ENCODE measurements at regions of chr10 and their contacts with region 1.

Region 1: GRCh38 chr10:60964257-60965235 is 20.6 kb upstream of the RHOBTB1 start:
- DNase-seq: peak in 7 of 9 donors; percentile 9 to 47 (median 29)
- ATAC-seq: peak; percentile 74
- H3K4me3 ChIP-seq: no peak overlapping the region
- H3K4me3 Mint-ChIP-seq: no peak overlapping the region
- H3K27ac ChIP-seq: no peak overlapping the region
- H3K27ac Mint-ChIP-seq: no peak overlapping the region
- H3K4me1 ChIP-seq: no peaks in the 10 kb centered on the region
- H3K4me1 Mint-ChIP-seq: peaks cover 0 to 18% (median 0%) of the 10 kb centered on the region in 7 donors
- H3K27me3 ChIP-seq: no peaks in the 10 kb centered on the region
- H3K27me3 Mint-ChIP-seq: peaks cover 24 to 30% (median 26%) of the 10 kb centered on the region in 5 donors

Region 2: DNA sequence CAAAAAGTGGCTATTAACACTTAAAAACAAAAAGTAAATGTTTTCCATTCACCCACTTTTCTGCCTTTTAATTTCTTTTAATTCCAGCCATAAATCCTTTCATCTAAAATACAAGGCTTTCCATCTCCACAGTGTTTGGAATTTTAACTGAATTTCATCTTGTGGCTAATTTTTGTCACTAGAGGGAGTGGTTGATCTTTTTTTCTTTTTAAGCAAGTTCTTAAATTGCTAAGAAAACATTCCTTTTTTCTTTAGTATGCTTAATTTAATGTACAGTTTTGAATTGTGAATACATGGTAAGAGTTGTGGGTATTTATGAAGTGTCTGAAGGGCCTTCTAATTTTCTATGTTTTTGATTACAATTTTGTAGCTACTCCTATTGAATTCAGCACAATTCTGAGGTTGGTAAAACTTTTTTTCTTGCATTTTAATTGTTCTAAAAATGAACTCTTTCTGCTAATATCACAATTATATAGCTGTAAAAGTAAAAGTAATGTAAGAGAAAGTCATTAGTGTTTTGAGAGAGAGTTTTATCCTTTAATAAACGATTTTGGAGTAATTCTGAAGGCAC is 520.0 kb before region 1 on chr10:
- CTCF ChIA-PET with region 1: no interaction called
- POLR2A ChIA-PET with region 1: no interaction called
- intact Hi-C with region 1: loop called in 1 of 2 experiments (anchors 10 kb)
- DNase-seq: no peak
- ATAC-seq: no peak
- H3K4me3 ChIP-seq: no peak overlapping the region
- H3K4me3 Mint-ChIP-seq: no peak overlapping the region
- H3K27ac ChIP-seq: no peak overlapping the region
- H3K27ac Mint-ChIP-seq: no peak overlapping the region
- H3K4me1 ChIP-seq: peaks cover 0 to 11% of the 10 kb centered on the region in 2 donors
- H3K4me1 Mint-ChIP-seq: peaks cover 12 to 34% (median 20%) of the 10 kb centered on the region in 7 donors
- H3K27me3 ChIP-seq: no peaks in the 10 kb centered on the region
- H3K27me3 Mint-ChIP-seq: no peaks in the 10 kb centered on the region

Region 3: GRCh38 chr10:60816628-60817397 is 147.7 kb before region 1 on chr10:
- CTCF ChIA-PET with region 1: no interaction called
- POLR2A ChIA-PET with region 1: no interaction called
- intact Hi-C with region 1: loop called (anchors 1 kb)
- DNase-seq: peak in 7 of 9 donors; percentile 12 to 63 (median 40)
- ATAC-seq: peak; percentile 83
- H3K4me3 ChIP-seq: no peak overlapping the region
- H3K4me3 Mint-ChIP-seq: no peak overlapping the region
- H3K27ac ChIP-seq: no peak overlapping the region
- H3K27ac Mint-ChIP-seq: no peak overlapping the region
- H3K4me1 ChIP-seq: no peaks in the 10 kb centered on the region
- H3K4me1 Mint-ChIP-seq: peaks cover 0 to 9% (median 5%) of the 10 kb centered on the region in 7 donors
- H3K27me3 ChIP-seq: no peaks in the 10 kb centered on the region
- H3K27me3 Mint-ChIP-seq: peaks cover 0 to 26% (median 0%) of the 10 kb centered on the region in 5 donors

Region 4: DNA sequence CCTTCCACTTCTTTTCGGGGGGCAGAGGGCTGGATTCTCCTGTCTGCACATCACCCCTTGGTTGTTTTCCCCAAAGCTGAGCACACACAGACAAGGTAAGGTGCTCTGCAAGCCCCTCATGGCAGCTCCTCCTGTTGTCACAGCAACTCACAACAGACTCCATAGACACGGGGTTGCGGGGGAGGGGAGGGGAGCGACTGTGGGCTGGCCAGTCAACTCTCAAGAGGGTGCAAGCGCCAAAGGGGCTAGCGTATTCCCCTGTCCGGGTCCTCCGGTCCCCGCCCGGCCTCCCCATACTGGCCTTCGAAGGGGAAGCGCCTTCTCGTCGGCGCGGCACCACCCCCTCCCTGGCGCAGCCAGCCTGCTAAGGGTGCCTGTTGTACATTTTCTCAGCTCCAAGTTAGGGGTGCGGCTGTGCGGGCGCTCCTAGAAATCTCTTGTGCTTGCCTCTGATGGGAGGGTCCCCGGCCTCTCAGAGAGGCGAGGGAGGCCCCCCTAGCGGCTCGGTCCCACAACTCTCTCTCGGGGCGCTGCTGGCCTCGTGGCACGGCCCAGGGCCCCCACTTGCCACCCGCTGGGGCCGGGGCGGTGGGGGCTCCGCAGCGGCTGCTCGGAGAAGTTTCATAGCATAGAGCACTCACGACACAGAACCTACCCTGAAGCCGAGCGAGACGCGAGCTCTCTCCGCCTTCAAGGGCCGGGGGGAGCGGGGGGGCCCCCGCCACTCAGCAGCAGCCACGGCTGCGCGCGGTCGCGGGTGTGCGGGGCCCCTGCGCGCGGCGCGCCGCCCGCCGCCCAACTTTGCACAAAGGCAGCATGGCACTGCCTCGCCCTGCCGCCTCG is 21.0 kb before region 1 on chr10:
- CTCF ChIA-PET with region 1: no interaction called
- POLR2A ChIA-PET with region 1: no interaction called
- intact Hi-C with region 1: loop called in 1 of 2 experiments (anchors 2 kb)
- DNase-seq: peak in 5 of 9 donors; percentile 5 to 28 (median 9)
- ATAC-seq: peak; percentile 62
- H3K4me3 ChIP-seq: peak overlapping the region; percentile 22
- H3K4me3 Mint-ChIP-seq: peak overlapping the region in 9 of 10 donors; percentile 30 to 87 (median 69)
- H3K27ac ChIP-seq: no peak overlapping the region
- H3K27ac Mint-ChIP-seq: peak overlapping the region in 1 of 9 donors; percentile 59
- H3K4me1 ChIP-seq: peaks cover 6 to 9% of the 10 kb centered on the region in 2 donors
- H3K4me1 Mint-ChIP-seq: peaks cover 6 to 17% (median 12%) of the 10 kb centered on the region in 7 donors
- H3K27me3 ChIP-seq: peaks cover 4 to 9% of the 10 kb centered on the region in 2 donors
- H3K27me3 Mint-ChIP-seq: peaks cover 50 to 88% (median 72%) of the 10 kb centered on the region in 5 donors

Measured in naive thymus-derived CD4-positive, alpha-beta T cell (primary cell).